ENCODE measurements at regions of chr2 and their contacts with region 1.

Region 1: DNA sequence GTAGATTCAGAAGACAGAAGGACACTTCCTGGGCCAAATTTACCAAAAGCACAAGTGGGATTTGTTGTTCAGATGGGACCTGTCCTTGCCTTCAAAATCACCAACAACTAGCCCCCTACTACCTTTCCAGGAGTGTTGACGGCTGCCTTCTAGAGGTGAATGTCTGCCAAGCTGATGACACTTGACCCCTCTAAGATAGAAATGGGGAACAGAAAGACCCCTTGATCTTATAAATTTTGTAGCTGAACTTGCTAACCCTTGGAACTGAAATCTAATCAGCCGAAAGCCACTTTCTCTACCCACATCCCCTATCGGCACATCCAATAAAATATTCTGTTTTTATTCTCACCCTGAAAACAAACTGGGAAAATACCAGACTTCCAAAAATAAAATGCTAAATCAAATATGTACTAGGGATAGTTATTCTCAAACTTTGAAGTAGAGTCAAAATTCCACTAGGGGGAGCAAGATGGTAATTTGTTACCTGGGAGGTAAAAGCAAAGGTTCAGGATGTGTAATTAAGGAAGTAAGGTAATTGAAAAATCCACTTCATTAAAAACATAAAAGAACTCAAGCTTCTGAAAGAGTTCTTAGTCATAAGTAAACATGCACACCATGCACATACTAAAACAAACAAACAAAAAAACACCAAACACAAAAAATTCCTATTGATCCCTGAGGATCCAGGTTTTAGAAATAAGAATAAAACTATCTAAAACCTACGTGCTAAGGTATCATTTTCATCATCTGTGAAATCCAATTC is 119.2 kb downstream of the ANKRD44 start:
- DNase-seq: peak in 1 of 2 donors; percentile 76
- H3K4me3 ChIP-seq: no peak overlapping the region
- H3K27ac ChIP-seq: no peak overlapping the region
- H3K4me1 ChIP-seq: peaks cover 6 to 43% (median 17%) of the 10 kb centered on the region in 4 donors
- H3K27me3 ChIP-seq: no peaks in the 10 kb centered on the region
- CTCF ChIP-seq: peak in 5 of 7 experiments; percentile 41 to 77 (median 64)
- EP300 ChIP-seq: no peak
- POLR2A ChIP-seq: no peak

Region 2: DNA sequence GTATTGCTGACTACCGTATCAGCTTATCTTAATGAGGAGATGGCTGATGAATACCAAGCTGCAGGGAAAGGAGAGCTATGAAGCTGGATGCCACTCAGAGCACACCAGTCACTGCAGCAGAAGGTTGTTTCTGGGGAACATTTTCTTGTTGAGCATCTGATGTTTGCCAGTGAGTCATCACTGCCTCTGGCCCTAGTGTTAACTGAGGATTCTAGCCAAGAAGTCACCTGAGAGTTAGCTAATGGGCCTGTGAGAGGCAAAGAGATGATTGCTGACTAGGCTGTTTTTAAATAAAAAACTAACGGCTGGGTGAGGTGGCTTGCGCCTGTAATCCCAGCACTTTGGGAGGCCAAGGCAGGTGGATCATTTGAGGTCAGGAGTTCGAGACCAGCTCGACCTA is 514.0 kb before region 1 on chr2:
- intact Hi-C with region 1: no loop called
- DNase-seq: peak in 1 of 2 donors; percentile 8
- H3K4me3 ChIP-seq: no peak overlapping the region
- H3K27ac ChIP-seq: no peak overlapping the region
- H3K4me1 ChIP-seq: no peaks in the 10 kb centered on the region
- H3K27me3 ChIP-seq: no peaks in the 10 kb centered on the region
- CTCF ChIP-seq: no peak
- EP300 ChIP-seq: no peak
- POLR2A ChIP-seq: no peak

Region 3: GRCh38 chr2:197042739-197043196 is 148.6 kb before region 1 on chr2:
- intact Hi-C with region 1: no loop called
- DNase-seq: no peak
- H3K4me3 ChIP-seq: no peak overlapping the region
- H3K27ac ChIP-seq: no peak overlapping the region
- H3K4me1 ChIP-seq: no peaks in the 10 kb centered on the region
- H3K27me3 ChIP-seq: no peaks in the 10 kb centered on the region
- CTCF ChIP-seq: no peak
- EP300 ChIP-seq: no peak
- POLR2A ChIP-seq: no peak

Region 4: GRCh38 chr2:197310271-197310985 is 119.1 kb after region 1 on chr2 and contains the start of gene ANKRD44:
- intact Hi-C with region 1: loop called (anchors 5 kb)
- DNase-seq: peak; percentile 89 to 96
- H3K4me3 ChIP-seq: peak within 1 kb of the TSS; percentile 65 to 83 (median 69)
- H3K27ac ChIP-seq: peak within 1 kb of the TSS; percentile 87 to 93 (median 88)
- H3K4me1 ChIP-seq: peaks cover 16 to 59% (median 38%) of the 10 kb centered on the region in 4 donors
- H3K27me3 ChIP-seq: no peaks in the 10 kb centered on the region
- CTCF ChIP-seq: peak in 5 of 7 experiments; percentile 24 to 59 (median 38)
- EP300 ChIP-seq: no peak
- POLR2A ChIP-seq: no peak
- total RNA-seq, gene ANKRD44: 1.2 to 58.4 (median 24.6) TPM

Region 5: GRCh38 chr2:197378494-197379307 is 187.3 kb after region 1 on chr2:
- intact Hi-C with region 1: loop called (anchors 2 kb)
- DNase-seq: peak; percentile 51 to 78
- H3K4me3 ChIP-seq: no peak overlapping the region
- H3K27ac ChIP-seq: no peak overlapping the region
- H3K4me1 ChIP-seq: peaks cover 0 to 7% (median 3%) of the 10 kb centered on the region in 4 donors
- H3K27me3 ChIP-seq: no peaks in the 10 kb centered on the region
- CTCF ChIP-seq: peak in 5 of 7 experiments; percentile 47 to 80 (median 69)
- EP300 ChIP-seq: no peak
- POLR2A ChIP-seq: no peak

Region 6: DNA sequence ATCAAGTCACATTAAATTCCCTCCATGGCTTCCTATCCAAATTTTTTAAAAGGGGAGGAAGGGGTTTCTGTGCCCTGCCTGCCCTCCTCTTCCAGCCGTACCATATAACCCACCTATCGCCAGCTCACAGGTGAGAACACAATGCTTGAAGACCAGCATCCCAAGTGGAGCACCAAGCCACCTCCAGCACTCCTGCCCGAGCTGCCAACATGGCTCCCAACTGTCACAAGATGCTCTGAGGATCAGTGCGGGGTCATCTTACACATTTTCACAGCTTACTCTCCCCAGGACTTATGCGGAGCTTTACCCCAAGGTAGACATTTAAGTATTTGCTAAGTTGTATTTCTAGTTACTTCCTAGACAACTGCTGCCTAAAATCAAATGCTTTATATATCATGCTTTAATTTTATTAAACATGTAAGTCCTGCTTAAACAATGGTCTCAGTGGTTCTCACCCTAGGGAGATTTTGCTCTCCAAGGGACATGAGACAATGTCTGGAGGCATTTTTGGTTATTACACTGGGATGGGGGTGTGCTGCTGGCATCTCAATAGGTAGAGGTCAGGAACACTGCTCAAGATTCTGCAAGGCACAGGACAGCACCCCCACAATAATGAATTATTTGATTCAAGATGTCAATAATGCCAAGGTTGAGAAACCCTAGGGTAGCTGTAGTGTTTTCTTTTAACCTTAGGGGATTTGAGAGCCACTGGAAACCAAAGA is 197.7 kb after region 1 on chr2:
- intact Hi-C with region 1: no loop called
- DNase-seq: no peak
- H3K4me3 ChIP-seq: no peak overlapping the region
- H3K27ac ChIP-seq: no peak overlapping the region
- H3K4me1 ChIP-seq: no peaks in the 10 kb centered on the region
- H3K27me3 ChIP-seq: no peaks in the 10 kb centered on the region
- CTCF ChIP-seq: no peak
- EP300 ChIP-seq: no peak
- POLR2A ChIP-seq: no peak